ENCODE measurements at regions of chr5 and their contacts with region 1.

Region 1: GRCh38 chr5:134592141-134592746 is 40.4 kb downstream of the SAR1B start:
- DNase-seq: peak; percentile 82
- H3K4me3 Mint-ChIP-seq: no peak overlapping the region
- H3K27ac Mint-ChIP-seq: peak overlapping the region; percentile 75
- H3K4me1 Mint-ChIP-seq: peaks cover 20% of the 10 kb centered on the region
- H3K27me3 Mint-ChIP-seq: no peaks in the 10 kb centered on the region
- CTCF ChIP-seq: no peak

Region 2: GRCh38 chr5:134296213-134296612 is 296.0 kb before region 1 on chr5:
- CTCF ChIA-PET with region 1: interaction called, 35 read pairs
- POLR2A ChIA-PET with region 1: no interaction called
- intact Hi-C with region 1: no loop called
- DNase-seq: no peak
- H3K4me3 Mint-ChIP-seq: no peak overlapping the region
- H3K27ac Mint-ChIP-seq: no peak overlapping the region
- H3K4me1 Mint-ChIP-seq: no peaks in the 10 kb centered on the region
- H3K27me3 Mint-ChIP-seq: peaks cover 2% of the 10 kb centered on the region
- CTCF ChIP-seq: no peak